Gastrocnemius medialis (tissue), 4 donors: ENCODE measurements at regions of chr20 and their contacts with region 1.

Region 1: GRCh38 chr20:45322952-45323383 is 14.9 kb upstream of the MATN4 start:
- DNase-seq: peak; percentile 95 to 98
- ATAC-seq: peak; percentile 84 to 89
- H3K4me3 ChIP-seq: no peak overlapping the region
- H3K27ac ChIP-seq: peak overlapping the region; percentile 90 to 100 (median 92)
- H3K4me1 ChIP-seq: no peaks in the 10 kb centered on the region
- H3K27me3 ChIP-seq: no peaks in the 10 kb centered on the region
- CTCF ChIP-seq: peak; percentile 53 to 69 (median 60)
- POLR2A ChIP-seq: no peak

Region 2: DNA sequence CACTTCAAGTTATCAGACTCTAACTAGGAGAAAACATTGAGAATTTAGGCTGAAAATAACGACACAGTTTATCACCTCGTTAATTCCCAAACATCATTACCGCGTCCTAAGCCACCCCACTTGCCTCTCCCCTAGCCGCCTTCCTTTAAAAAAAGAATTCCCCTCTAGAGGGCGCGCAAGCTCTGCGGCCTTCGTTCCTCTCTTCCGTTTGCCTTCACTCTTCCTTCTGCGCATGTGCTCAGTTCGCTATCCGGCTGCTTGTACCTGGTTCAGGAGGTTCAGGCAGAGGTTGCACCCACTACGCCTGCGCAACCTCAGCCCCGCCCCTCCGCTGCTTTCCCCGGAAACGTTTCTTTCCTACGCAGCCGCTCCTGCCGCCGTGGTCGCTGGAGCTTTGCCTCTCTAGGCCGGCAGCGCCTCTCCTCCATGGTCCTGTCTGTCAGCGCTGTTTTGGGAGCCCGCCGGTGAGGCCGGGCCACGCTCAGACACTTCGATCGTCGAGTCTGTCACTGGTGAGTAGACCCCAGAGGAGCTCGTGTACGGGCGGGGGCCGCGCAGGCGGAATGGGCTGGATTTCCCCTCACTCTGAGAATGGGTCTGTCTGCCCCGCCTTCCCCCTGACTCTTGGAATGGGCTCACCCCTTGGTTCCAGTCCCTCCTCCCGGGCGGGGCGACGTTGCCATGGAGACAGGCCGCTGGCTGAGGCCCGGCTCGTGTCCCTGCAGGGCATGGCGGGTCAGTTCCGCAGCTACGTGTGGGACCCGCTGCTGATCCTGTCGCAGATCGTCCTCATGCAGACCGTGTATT is 40.0 kb after region 1 on chr20 and contains the start of gene SYS1:
- in situ Hi-C with region 1: no loop called
- intact Hi-C with region 1: loop called (anchors 1 kb)
- DNase-seq: peak; percentile 98
- ATAC-seq: peak; percentile 63 to 76
- H3K4me3 ChIP-seq: peak within 1 kb of the TSS; percentile 66 to 86 (median 75)
- H3K27ac ChIP-seq: peak within 1 kb of the TSS; percentile 94 to 99 (median 96)
- H3K4me1 ChIP-seq: peaks cover 26 to 27% of the 10 kb centered on the region in 2 donors
- H3K27me3 ChIP-seq: no peaks in the 10 kb centered on the region
- CTCF ChIP-seq: peak; percentile 89 to 95 (median 95)
- POLR2A ChIP-seq: peak; percentile 90 to 97
- total RNA-seq, gene SYS1: 34.0 to 59.5 (median 43.7) TPM

Region 3: GRCh38 chr20:45406259-45407066 is 83.5 kb after region 1 on chr20:
- in situ Hi-C with region 1: no loop called
- intact Hi-C with region 1: loop called (anchors 2 kb)
- DNase-seq: peak; percentile 49 to 62
- ATAC-seq: peak; percentile 70 to 73
- H3K4me3 ChIP-seq: peak overlapping the region; percentile 87 to 96 (median 91)
- H3K27ac ChIP-seq: peak overlapping the region; percentile 96 to 100 (median 98)
- H3K4me1 ChIP-seq: peaks cover 40 to 42% of the 10 kb centered on the region in 2 donors
- H3K27me3 ChIP-seq: no peaks in the 10 kb centered on the region
- CTCF ChIP-seq: no peak
- POLR2A ChIP-seq: peak; percentile 55 to 62

Region 4: DNA sequence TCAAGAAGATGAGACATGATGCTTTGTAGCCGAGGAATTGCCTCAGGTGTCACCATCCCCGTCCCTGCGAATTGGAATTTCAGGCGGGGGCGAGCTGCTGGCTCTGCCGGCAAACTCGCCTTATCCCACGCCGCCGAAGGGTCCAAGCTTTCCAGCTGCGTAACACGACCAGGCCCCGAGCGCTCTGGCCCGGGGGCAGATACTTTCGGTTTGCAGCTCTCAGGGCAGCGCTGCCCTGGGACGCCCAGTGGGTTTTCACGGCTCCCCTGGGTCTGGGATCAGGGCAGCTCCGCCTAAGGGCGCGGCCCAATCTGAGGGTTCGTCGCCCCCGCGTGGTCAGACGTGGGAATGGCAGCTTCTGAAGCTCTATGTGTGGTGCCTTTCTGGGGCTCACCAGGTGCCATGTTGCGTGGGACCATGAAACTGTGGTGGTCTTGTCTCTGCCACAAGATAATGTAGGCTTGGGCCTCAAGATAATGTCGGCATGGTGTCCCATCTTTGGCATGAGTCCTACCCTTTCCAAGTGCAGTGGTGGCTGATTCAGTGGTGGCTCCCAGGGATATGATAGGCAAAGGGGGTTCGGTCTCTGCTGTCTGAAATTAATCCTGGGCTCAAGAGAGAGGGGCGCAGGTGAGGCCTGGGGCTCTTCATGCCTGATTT is 113.9 kb after region 1 on chr20:
- in situ Hi-C with region 1: loop called (anchors 5 to 10 kb)
- intact Hi-C with region 1: loop called (anchors 1 kb)
- DNase-seq: peak; percentile 64 to 87
- ATAC-seq: peak; percentile 94 to 96
- H3K4me3 ChIP-seq: peak overlapping the region; percentile 60 to 82 (median 74)
- H3K27ac ChIP-seq: peak overlapping the region; percentile 81 to 86 (median 84)
- H3K4me1 ChIP-seq: peaks cover 4 to 6% of the 10 kb centered on the region in 2 donors
- H3K27me3 ChIP-seq: no peaks in the 10 kb centered on the region
- CTCF ChIP-seq: peak; percentile 94 to 98 (median 97)
- POLR2A ChIP-seq: no peak

Region 5: GRCh38 chr20:45771182-45771759 is 448.3 kb after region 1 on chr20:
- in situ Hi-C with region 1: loop called (anchors 5 to 10 kb)
- intact Hi-C with region 1: loop called (anchors 1 kb)
- DNase-seq: peak; percentile 15 to 67
- ATAC-seq: peak; percentile 87 to 90
- H3K4me3 ChIP-seq: no peak overlapping the region
- H3K27ac ChIP-seq: peak overlapping the region; percentile 34 to 54 (median 44)
- H3K4me1 ChIP-seq: peaks cover 4 to 7% of the 10 kb centered on the region in 2 donors
- H3K27me3 ChIP-seq: no peaks in the 10 kb centered on the region
- CTCF ChIP-seq: peak; percentile 88 to 94 (median 91)
- POLR2A ChIP-seq: no peak